PC-9 (cell line): ENCODE measurements at regions of chr20 and their contacts with region 1.

Region 1: GRCh38 chr20:3483784-3484183 is 13.0 kb downstream of the ATRN start:
- DNase-seq: no peak
- H3K4me3 ChIP-seq: no peak overlapping the region
- H3K27ac ChIP-seq: 0 out of 2 replicates have a peak overlapping the region, but pooled peaks have one; percentile 7
- H3K4me1 ChIP-seq: peaks cover 7% of the 10 kb centered on the region; the same call in 1 of the 2 replicates
- H3K27me3 ChIP-seq: no peaks in the 10 kb centered on the region
- CTCF ChIP-seq: no peak

Region 2: GRCh38 chr20:1955217-1955616 is 1528.6 kb before region 1 on chr20:
- CTCF ChIA-PET with region 1: no interaction called
- POLR2A ChIA-PET with region 1: interaction called, 15 read pairs
- intact Hi-C with region 1: no loop called
- DNase-seq: no peak
- H3K4me3 ChIP-seq: no peak overlapping the region
- H3K27ac ChIP-seq: no peak overlapping the region
- H3K4me1 ChIP-seq: no peaks in the 10 kb centered on the region
- H3K27me3 ChIP-seq: peaks cover 9% of the 10 kb centered on the region; the same call in 1 of the 2 replicates
- CTCF ChIP-seq: no peak